T-cell (primary cell): ENCODE measurements at regions of chrX and their contacts with region 1.

Region 1: DNA sequence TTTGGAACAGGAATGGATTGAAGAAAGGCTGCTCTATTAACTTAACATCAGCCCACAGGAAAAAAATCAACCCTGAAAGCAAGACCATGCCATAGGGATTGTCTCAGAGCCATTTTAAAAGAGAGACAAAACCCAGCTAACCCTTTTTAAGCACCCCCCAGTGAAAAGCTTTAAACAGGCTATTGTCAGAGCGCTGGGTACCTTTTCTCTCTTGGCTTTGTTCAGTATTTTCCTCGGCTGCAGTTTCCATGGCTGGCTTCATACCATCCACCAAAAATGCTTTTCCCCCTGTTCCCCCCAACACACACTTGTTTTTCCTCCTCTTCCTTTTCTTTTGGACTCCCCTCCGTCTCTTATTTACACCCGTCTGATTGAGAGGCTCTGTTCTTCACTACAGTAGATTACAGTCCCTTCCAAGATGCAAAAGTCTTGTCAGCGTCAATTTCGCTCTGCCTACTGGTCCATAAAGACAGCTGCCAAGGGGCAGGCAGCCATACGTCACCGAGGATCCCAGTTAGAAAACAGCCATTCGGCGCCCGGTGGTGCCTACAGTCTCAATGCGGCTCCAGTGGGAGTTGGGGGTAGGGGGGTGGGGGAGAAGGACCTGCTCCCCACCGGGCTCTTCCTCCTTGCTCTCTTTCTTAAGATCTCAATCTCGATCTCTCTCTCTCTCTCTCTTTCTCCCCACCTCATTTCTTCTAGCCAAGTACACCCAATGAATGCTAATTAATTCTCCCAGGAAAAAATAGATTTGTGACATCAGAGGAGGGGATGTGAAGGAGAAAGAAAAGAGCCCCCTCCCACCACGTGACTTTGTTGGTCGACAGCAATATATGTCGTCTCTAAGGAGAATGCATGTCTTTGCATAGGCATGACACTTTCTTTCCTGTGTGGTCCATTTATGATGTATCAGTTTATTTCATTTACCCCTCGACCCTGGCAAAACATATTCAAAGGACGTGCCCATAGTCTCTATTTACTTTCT is at the start of gene GPM6B:
- DNase-seq: no peak
- ATAC-seq: no peak
- H3K4me3 ChIP-seq: no peak within 1 kb of the TSS
- H3K4me3 Mint-ChIP-seq: no peak within 1 kb of the TSS
- H3K27ac ChIP-seq: no peak within 1 kb of the TSS
- H3K27ac Mint-ChIP-seq: no peak within 1 kb of the TSS
- H3K4me1 ChIP-seq: no peaks in the 10 kb centered on the region
- H3K4me1 Mint-ChIP-seq: no peaks in the 10 kb centered on the region
- H3K27me3 ChIP-seq: no peaks in the 10 kb centered on the region
- H3K27me3 Mint-ChIP-seq: peaks cover 23 to 50% of the 10 kb centered on the region in 2 donors
- total RNA-seq, gene GPM6B: 0.09 to 0.35 TPM in 2 of 5 donors, not detected in the others

Region 2: DNA sequence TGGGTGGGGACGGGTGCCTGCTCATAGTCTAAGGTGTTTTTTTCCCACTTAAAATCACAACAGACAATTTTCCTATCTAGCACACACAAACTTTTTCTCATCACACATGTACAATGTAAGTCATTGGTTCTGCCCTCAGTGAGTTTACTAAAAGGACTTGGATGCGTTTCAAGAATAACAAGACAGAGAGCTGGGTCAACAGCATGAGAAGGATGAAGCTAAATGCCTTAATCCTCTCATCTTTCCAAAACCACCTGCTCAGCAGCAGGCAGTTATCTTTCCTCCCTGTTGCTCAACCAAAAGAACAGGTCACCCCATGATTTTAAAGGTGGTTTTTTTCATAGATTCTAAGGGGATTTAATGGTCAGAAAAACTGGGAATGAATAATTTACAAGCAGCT is 42.2 kb before region 1 on chrX:
- CTCF ChIA-PET with region 1: no interaction called
- POLR2A ChIA-PET with region 1: no interaction called
- DNase-seq: no peak
- ATAC-seq: no peak
- H3K4me3 ChIP-seq: no peak overlapping the region
- H3K4me3 Mint-ChIP-seq: no peak overlapping the region
- H3K27ac ChIP-seq: no peak overlapping the region
- H3K27ac Mint-ChIP-seq: no peak overlapping the region
- H3K4me1 ChIP-seq: no peaks in the 10 kb centered on the region
- H3K4me1 Mint-ChIP-seq: peaks cover 3 to 5% (median 4%) of the 10 kb centered on the region in 3 donors
- H3K27me3 ChIP-seq: no peaks in the 10 kb centered on the region
- H3K27me3 Mint-ChIP-seq: peaks cover 0 to 6% of the 10 kb centered on the region in 2 donors

Region 3: DNA sequence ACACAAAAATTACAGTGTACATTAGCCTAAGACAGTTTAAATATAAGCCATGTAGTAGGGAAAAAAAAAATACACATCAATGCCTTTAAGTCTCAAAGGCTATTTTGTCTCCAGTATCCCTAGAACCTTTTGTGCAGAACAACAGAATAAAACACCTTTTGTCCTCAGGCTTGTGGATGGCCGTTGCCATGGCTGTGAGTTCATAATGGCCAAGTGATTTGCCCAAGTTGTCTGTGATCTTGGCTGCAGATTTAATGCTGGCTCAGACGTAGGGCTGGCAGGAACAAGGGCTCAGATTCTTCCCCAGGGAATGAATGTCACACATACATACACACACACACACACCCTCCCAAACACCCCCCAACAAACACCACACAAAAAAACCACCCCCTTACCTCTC is 25.4 kb before region 1 on chrX:
- CTCF ChIA-PET with region 1: no interaction called
- POLR2A ChIA-PET with region 1: interaction called in 1 of 2 experiments, 23 read pairs
- DNase-seq: no peak
- ATAC-seq: no peak
- H3K4me3 ChIP-seq: no peak overlapping the region
- H3K4me3 Mint-ChIP-seq: no peak overlapping the region
- H3K27ac ChIP-seq: no peak overlapping the region
- H3K27ac Mint-ChIP-seq: no peak overlapping the region
- H3K4me1 ChIP-seq: no peaks in the 10 kb centered on the region
- H3K4me1 Mint-ChIP-seq: no peaks in the 10 kb centered on the region
- H3K27me3 ChIP-seq: no peaks in the 10 kb centered on the region
- H3K27me3 Mint-ChIP-seq: peaks cover 0 to 22% of the 10 kb centered on the region in 2 donors

Region 4: GRCh38 chrX:13923845-13924244 is 106.9 kb after region 1 on chrX:
- CTCF ChIA-PET with region 1: no interaction called
- POLR2A ChIA-PET with region 1: no interaction called
- DNase-seq: no peak
- ATAC-seq: no peak
- H3K4me3 ChIP-seq: no peak overlapping the region
- H3K4me3 Mint-ChIP-seq: no peak overlapping the region
- H3K27ac ChIP-seq: no peak overlapping the region
- H3K27ac Mint-ChIP-seq: no peak overlapping the region
- H3K4me1 ChIP-seq: no peaks in the 10 kb centered on the region
- H3K4me1 Mint-ChIP-seq: no peaks in the 10 kb centered on the region
- H3K27me3 ChIP-seq: no peaks in the 10 kb centered on the region
- H3K27me3 Mint-ChIP-seq: peaks cover 2 to 19% of the 10 kb centered on the region in 2 donors

Region 5: DNA sequence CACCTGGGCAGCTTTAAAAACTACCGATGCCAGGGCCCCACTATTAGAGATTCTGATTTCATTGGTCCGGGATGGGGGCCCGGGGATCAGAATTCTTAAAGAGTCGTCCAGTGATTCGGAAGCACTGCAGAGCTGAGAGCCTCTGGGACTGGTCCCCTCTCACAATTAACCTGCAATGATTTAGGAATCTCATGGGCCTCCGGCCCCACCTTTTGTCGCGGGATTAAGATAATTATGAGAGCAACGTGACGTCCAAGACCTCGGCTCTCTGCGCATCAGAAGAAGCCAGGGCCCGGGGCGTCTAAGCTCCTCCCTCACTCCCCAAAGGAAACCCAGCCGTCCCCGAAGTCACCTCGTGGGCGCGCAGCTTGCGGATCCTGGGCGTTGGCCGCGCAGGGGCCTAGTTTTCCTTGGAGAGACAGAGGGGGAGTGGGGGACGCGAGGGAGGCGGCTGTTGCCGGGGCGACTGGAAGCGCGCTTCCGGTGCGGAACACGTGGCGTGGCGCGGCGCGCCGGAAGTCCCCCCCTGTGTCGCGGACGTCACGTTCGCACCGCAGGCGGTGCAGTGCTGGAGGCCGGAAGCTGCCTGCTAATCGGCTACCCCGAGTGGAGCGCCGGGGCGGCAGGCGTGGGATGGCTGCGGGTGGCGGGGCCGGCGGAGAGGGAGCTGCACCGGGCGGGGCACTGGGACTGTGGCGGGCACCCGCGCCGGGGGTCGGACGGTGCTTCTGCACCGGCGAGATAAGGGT is 212.7 kb after region 1 on chrX and contains the start of gene GEMIN8:
- CTCF ChIA-PET with region 1: no interaction called
- POLR2A ChIA-PET with region 1: no interaction called
- DNase-seq: peak; percentile 71 to 92 (median 84)
- ATAC-seq: peak; percentile 94 to 97 (median 96)
- H3K4me3 ChIP-seq: peak within 1 kb of the TSS; percentile 86 to 88
- H3K4me3 Mint-ChIP-seq: peak within 1 kb of the TSS; percentile 88 to 96 (median 91)
- H3K27ac ChIP-seq: peak within 1 kb of the TSS; percentile 81
- H3K27ac Mint-ChIP-seq: peak within 1 kb of the TSS; percentile 94 to 99
- H3K4me1 ChIP-seq: peaks cover 11 to 21% of the 10 kb centered on the region in 2 experiments
- H3K4me1 Mint-ChIP-seq: peaks cover 39 to 52% (median 45%) of the 10 kb centered on the region in 3 donors
- H3K27me3 ChIP-seq: no peaks in the 10 kb centered on the region
- H3K27me3 Mint-ChIP-seq: peaks cover 2 to 9% of the 10 kb centered on the region in 2 donors
- total RNA-seq, gene GEMIN8: 11.3 to 16.4 (median 15.0) TPM